ENCODE measurements at regions of chr2 and their contacts with region 1.

Region 1: GRCh38 chr2:33891616-33892015 is 292.5 kb upstream of the FAM98A start:
- DNase-seq: no peak
- H3K4me3 ChIP-seq: no peak overlapping the region
- H3K27ac ChIP-seq: no peak overlapping the region
- H3K4me1 ChIP-seq: no peaks in the 10 kb centered on the region
- H3K27me3 ChIP-seq: no peaks in the 10 kb centered on the region
- CTCF ChIP-seq: no peak
- POLR2A ChIP-seq: no peak

Region 2: DNA sequence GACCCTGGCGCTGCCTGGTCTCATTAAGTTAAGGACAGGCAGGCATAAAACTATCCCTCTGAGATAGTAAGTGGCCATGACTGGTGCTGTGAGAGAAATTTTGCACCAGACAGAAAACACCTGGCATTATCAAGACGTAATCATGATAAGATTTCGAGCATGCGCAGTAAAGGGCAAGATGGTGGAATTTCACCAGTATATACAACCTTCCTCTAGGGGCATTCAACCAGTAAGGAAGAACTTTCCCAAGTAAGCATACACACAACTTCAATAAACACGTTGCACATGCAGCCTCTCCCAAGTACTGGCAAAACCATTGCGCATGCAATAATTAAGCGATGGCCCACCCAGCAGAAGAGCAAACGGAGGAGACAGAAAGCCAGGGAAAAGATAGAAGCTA is 1087.5 kb after region 1 on chr2:
- intact Hi-C with region 1: no loop called
- DNase-seq: no peak
- H3K4me3 ChIP-seq: no peak overlapping the region
- H3K27ac ChIP-seq: no peak overlapping the region
- H3K4me1 ChIP-seq: no peaks in the 10 kb centered on the region
- H3K27me3 ChIP-seq: no peaks in the 10 kb centered on the region
- CTCF ChIP-seq: no peak
- POLR2A ChIP-seq: no peak

Region 3: DNA sequence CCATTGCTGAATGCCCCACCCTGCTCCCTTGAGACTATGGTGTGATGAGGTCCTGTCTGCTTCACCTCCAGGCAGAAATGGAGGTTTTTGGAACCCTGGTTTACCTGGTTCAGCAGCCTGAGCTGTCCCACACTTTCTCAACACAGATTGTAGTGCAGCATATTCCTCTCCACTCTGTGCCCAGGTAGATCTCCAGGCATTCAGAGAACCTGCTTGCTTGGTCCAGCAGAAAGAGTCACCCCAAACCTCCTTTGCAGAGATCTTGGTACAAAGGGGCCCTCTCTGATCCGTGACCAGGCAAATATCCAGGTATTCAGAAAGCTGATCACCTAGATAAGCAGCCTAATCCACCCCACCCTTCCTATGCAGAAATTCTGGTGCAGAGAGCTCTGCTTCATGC is 1175.8 kb after region 1 on chr2:
- intact Hi-C with region 1: loop called (anchors 10 kb)
- DNase-seq: no peak
- H3K4me3 ChIP-seq: no peak overlapping the region
- H3K27ac ChIP-seq: no peak overlapping the region
- H3K4me1 ChIP-seq: no peaks in the 10 kb centered on the region
- H3K27me3 ChIP-seq: no peaks in the 10 kb centered on the region
- CTCF ChIP-seq: no peak
- POLR2A ChIP-seq: no peak